Activated CD8-positive, alpha-beta T cell treated with anti-CD3 and anti-CD28 coated beads for 36 hours (primary cell): ENCODE measurements at regions of chr1 and their contacts with region 1.

Region 1: DNA sequence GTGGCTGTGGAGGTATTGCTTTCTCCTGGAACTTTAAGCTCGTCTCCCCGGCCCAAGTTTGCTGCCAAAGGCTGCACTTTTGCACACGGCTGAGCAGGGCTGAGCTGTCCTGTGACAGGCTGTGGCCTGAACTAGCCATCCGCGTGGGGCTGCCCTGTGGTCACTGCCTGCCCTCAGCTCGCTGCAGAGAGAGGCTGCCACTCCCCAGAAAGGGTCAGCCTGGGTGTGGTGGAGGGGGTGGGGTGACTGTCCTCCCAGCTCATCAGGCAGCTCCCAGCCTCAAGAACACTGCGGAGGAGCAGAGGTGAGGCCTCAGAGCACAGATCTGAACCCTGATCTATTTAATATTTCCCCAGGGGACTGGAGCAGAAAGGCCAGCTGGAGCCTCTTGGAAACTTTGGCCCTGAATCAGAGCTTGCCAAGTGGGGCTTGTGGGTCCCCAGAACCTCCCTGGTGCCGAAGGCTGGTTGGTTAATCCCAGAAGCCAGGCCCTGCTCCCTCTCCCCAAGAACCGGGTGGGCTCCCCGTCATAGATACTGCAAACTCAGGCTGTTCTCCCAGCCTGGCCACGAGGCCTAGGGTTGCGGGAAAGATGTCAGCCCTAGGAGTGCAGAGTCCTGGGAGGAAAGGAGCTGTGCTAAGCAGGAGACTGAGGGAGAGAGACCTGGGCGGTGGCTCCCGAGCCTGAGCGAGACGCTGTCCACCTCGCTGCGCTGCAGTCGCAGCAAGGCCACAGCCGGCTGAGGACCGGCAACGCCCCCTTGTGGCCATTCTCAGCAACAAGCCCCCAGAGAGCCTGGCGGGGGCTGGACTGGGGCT is 125.1 kb upstream of the IPO9 start:
- DNase-seq: peak; percentile 79
- ATAC-seq: peak; percentile 93
- H3K4me3 Mint-ChIP-seq: no peak overlapping the region
- H3K27ac Mint-ChIP-seq: no peak overlapping the region
- H3K4me1 Mint-ChIP-seq: no peaks in the 10 kb centered on the region
- H3K27me3 Mint-ChIP-seq: peaks cover 2% of the 10 kb centered on the region
- CTCF ChIP-seq: peak; percentile 82

Region 2: DNA sequence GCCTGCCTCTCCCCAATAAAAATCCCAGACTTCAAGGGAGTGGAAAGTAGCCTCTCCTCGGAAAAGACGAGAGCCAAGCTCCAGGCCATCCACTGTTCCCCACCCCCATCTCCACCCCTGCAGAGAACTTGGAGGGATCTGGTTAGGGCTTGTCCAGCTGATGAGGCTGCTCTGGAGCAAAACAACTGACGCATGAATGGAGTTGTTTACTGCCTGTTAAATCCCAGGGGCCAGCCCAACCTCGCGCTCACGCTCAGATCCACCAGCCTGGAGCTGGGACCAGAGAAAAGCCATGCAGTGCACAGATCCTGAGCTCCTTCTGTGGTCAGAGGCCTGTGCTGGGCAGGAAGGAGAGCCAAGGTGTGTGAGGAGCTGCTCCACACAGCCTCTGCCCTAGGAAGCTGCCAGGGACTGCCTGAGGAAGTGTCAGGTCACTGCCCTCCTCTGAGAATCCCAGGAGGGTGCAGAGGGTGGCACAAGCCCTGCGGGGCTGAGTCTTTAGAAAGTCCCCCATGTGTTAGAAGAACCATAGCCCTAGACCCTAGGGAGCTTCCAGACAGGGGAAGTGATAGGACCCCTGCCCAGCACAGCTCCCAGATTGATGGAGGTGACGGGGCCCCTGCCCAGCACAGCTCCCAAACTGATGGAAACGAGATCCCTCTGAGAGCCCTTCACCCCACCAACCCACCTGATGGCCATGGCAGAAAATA is 16.1 kb after region 1 on chr1:
- CTCF ChIA-PET with region 1: interaction called, 22 read pairs
- POLR2A ChIA-PET with region 1: interaction called, 3 read pairs
- intact Hi-C with region 1: no loop called
- DNase-seq: no peak
- ATAC-seq: no peak
- H3K4me3 Mint-ChIP-seq: no peak overlapping the region
- H3K27ac Mint-ChIP-seq: no peak overlapping the region
- H3K4me1 Mint-ChIP-seq: no peaks in the 10 kb centered on the region
- H3K27me3 Mint-ChIP-seq: peaks cover 2% of the 10 kb centered on the region
- CTCF ChIP-seq: no peak